PC-3 (cell line): ENCODE measurements at regions of chr6 and their contacts with region 1.

Region 1: DNA sequence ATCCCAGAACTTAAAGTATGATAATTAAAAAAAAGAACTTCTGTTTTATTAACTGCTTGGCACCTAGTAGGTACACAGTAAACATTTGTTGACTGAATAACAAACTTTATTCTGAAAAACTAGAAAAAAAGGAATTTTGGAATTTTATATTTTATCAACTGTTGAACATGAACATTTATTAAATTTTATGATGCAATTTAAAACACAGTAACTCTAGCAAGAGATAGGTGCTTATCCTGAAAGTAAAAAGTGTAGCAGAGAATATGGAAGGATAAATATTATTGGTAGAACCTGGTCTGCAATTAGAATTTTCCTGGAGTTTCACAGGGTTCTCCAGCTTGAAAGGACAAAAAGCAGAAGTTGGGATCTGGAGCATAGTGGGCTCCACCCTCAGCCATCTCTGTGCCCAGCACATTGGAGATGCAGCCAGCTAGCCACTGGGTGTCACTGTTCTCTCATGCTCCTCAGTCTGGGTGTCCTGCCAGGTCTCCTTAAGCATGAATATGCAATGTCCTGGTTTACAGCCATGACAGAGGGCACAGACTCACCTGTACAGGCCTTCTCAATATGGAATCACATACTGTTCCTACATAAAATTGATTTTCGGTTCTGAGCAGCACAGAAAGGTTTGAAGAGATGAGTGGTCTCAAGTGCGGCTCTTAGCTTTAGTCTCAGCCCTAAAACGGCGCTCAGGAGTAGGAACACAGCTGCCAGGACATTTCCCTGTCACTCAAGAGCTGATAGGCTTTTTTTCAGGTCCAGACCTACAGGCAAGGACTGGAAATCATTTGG is 31.7 kb upstream of the IL20RA start:
- DNase-seq: peak; percentile 80
- ATAC-seq: peak; percentile 100
- H3K4me3 ChIP-seq: no peak overlapping the region
- H3K27ac ChIP-seq: no peak overlapping the region
- H3K4me1 ChIP-seq: no peaks in the 10 kb centered on the region
- H3K27me3 ChIP-seq: no peaks in the 10 kb centered on the region
- CTCF ChIP-seq: peak; percentile 79

Region 2: GRCh38 chr6:136846046-136846445 is 230.4 kb before region 1 on chr6:
- CTCF ChIA-PET with region 1: no interaction called
- POLR2A ChIA-PET with region 1: no interaction called
- intact Hi-C with region 1: loop called (anchors 2 kb)
- DNase-seq: peak; percentile 64
- ATAC-seq: no peak
- H3K4me3 ChIP-seq: no peak overlapping the region
- H3K27ac ChIP-seq: no peak overlapping the region
- H3K4me1 ChIP-seq: no peaks in the 10 kb centered on the region
- H3K27me3 ChIP-seq: no peaks in the 10 kb centered on the region
- CTCF ChIP-seq: peak; percentile 62

Region 3: GRCh38 chr6:137415127-137415833 is 338.8 kb after region 1 on chr6:
- CTCF ChIA-PET with region 1: no interaction called
- POLR2A ChIA-PET with region 1: no interaction called
- intact Hi-C with region 1: loop called (anchors 2 kb)
- DNase-seq: peak; percentile 77
- ATAC-seq: peak; percentile 95
- H3K4me3 ChIP-seq: peak overlapping the region; percentile 66
- H3K27ac ChIP-seq: no peak overlapping the region
- H3K4me1 ChIP-seq: no peaks in the 10 kb centered on the region
- H3K27me3 ChIP-seq: peaks cover 15% of the 10 kb centered on the region
- CTCF ChIP-seq: peak; percentile 75